H1 (cell line): ENCODE measurements at regions of chr14 and their contacts with region 1.

Region 1: GRCh38 chr14:104999361-104999760 is 13.8 kb downstream of the CLBA1 start:
- DNase-seq: no peak
- H3K4me3 ChIP-seq: no peak overlapping the region
- H3K27ac ChIP-seq: no peak overlapping the region
- H3K4me1 ChIP-seq: 0 out of 7 replicates have a peak, but pooled peaks cover 0 to 2% (median 0%) of the 10 kb centered on the region in 4 experiments
- H3K27me3 ChIP-seq: no peaks in the 10 kb centered on the region
- CTCF ChIP-seq: no peak
- EP300 ChIP-seq: no peak
- POLR2A ChIP-seq: no peak
- RAD21 ChIP-seq: no peak

Region 2: DNA sequence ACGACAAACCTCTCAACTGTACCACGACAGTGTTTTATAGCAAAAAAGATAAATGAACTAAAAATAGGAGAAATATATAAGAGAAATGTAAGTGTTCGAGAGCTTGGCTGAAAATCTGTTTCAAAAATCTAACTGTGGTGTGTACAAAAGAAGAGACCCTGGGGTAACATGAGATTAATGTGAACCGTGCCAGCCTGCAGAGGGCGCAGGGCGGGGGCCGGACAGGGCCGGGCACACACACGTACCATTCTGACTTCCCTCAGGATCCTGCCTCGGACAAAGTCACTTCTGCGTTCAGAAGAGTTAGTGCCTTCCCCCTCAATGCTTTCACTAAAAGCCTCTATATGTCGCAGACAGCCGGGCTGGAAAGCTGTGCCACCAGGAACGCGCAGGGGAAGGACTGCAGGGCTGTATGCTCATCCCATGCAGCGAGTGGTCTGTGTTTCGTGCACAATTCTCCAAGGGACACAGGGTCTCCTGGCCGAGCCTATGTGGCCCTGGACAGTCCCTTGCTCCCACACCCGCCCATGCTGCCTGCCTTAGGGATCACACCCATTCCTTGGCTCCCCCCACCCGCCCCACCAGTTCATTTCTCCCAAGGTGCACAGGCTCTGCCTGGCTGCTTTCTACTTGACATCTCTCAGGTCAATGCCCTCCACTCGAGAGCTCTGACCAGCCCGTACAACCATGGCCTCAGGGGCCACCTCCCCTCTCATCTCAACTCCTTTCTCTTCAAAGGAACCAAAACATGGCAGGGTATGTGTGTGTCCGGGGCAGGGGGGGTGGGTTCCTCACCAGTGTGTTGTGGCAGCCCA is 13.0 kb after region 1 on chr14:
- CTCF ChIA-PET with region 1: interaction called, 10 read pairs
- POLR2A ChIA-PET with region 1: interaction called, 10 read pairs
- DNase-seq: no peak
- H3K4me3 ChIP-seq: no peak overlapping the region
- H3K27ac ChIP-seq: no peak overlapping the region; the same call in 1 of the 2 replicates
- H3K4me1 ChIP-seq: peaks cover 4 to 10% (median 7%) of the 10 kb centered on the region in 4 experiments; a peak in 6 of 7 replicates
- H3K27me3 ChIP-seq: no peaks in the 10 kb centered on the region
- CTCF ChIP-seq: peak; percentile 9 to 28 (median 17); a peak in 3 of 4 replicates
- EP300 ChIP-seq: no peak
- POLR2A ChIP-seq: no peak
- RAD21 ChIP-seq: no peak